ENCODE measurements at regions of chrX and their contacts with region 1.

Region 1: GRCh38 chrX:21798677-21799219 is 40.7 kb upstream of the MBTPS2 start:
- DNase-seq: peak; percentile 81
- H3K4me3 Mint-ChIP-seq: peak overlapping the region; percentile 28
- H3K27ac Mint-ChIP-seq: peak overlapping the region; percentile 95
- H3K4me1 Mint-ChIP-seq: peaks cover 65% of the 10 kb centered on the region
- H3K27me3 Mint-ChIP-seq: no peaks in the 10 kb centered on the region
- CTCF ChIP-seq: no peak

Region 2: GRCh38 chrX:21469071-21469470 is 329.7 kb before region 1 on chrX:
- CTCF ChIA-PET with region 1: no interaction called
- intact Hi-C with region 1: no loop called
- DNase-seq: no peak
- H3K4me3 Mint-ChIP-seq: no peak overlapping the region
- H3K27ac Mint-ChIP-seq: no peak overlapping the region
- H3K4me1 Mint-ChIP-seq: no peaks in the 10 kb centered on the region
- H3K27me3 Mint-ChIP-seq: no peaks in the 10 kb centered on the region
- CTCF ChIP-seq: no peak

Region 3: GRCh38 chrX:21839334-21840192 is 40.8 kb after region 1 on chrX and contains the start of gene MBTPS2:
- CTCF ChIA-PET with region 1: interaction called, 3 read pairs
- intact Hi-C with region 1: loop called (anchors 5 kb)
- DNase-seq: peak; percentile 84
- H3K4me3 Mint-ChIP-seq: peak within 1 kb of the TSS; percentile 86
- H3K27ac Mint-ChIP-seq: peak within 1 kb of the TSS; percentile 83
- H3K4me1 Mint-ChIP-seq: no peaks in the 10 kb centered on the region
- H3K27me3 Mint-ChIP-seq: no peaks in the 10 kb centered on the region
- CTCF ChIP-seq: no peak
- total RNA-seq, gene MBTPS2: 27.6 and 29.7 TPM in 2 replicates

Region 4: GRCh38 chrX:21940356-21940829 is 141.6 kb after region 1 on chrX and contains the start of gene SMS:
- CTCF ChIA-PET with region 1: no interaction called
- intact Hi-C with region 1: loop called (anchors 5 kb)
- DNase-seq: peak; percentile 79
- H3K4me3 Mint-ChIP-seq: peak within 1 kb of the TSS; percentile 70
- H3K27ac Mint-ChIP-seq: peak within 1 kb of the TSS; percentile 90
- H3K4me1 Mint-ChIP-seq: peaks cover 33% of the 10 kb centered on the region
- H3K27me3 Mint-ChIP-seq: no peaks in the 10 kb centered on the region
- CTCF ChIP-seq: no peak
- total RNA-seq, gene SMS: 215 and 225 TPM in 2 replicates

Region 5: GRCh38 chrX:21963731-21964405 is 165.1 kb after region 1 on chrX:
- CTCF ChIA-PET with region 1: no interaction called
- intact Hi-C with region 1: no loop called
- DNase-seq: no peak
- H3K4me3 Mint-ChIP-seq: no peak overlapping the region
- H3K27ac Mint-ChIP-seq: no peak overlapping the region
- H3K4me1 Mint-ChIP-seq: peaks cover 37% of the 10 kb centered on the region
- H3K27me3 Mint-ChIP-seq: no peaks in the 10 kb centered on the region
- CTCF ChIP-seq: no peak

Measured in Calu3 (cell line).